H1 (cell line): ENCODE measurements at regions of chr19 and their contacts with region 1.

Region 1: DNA sequence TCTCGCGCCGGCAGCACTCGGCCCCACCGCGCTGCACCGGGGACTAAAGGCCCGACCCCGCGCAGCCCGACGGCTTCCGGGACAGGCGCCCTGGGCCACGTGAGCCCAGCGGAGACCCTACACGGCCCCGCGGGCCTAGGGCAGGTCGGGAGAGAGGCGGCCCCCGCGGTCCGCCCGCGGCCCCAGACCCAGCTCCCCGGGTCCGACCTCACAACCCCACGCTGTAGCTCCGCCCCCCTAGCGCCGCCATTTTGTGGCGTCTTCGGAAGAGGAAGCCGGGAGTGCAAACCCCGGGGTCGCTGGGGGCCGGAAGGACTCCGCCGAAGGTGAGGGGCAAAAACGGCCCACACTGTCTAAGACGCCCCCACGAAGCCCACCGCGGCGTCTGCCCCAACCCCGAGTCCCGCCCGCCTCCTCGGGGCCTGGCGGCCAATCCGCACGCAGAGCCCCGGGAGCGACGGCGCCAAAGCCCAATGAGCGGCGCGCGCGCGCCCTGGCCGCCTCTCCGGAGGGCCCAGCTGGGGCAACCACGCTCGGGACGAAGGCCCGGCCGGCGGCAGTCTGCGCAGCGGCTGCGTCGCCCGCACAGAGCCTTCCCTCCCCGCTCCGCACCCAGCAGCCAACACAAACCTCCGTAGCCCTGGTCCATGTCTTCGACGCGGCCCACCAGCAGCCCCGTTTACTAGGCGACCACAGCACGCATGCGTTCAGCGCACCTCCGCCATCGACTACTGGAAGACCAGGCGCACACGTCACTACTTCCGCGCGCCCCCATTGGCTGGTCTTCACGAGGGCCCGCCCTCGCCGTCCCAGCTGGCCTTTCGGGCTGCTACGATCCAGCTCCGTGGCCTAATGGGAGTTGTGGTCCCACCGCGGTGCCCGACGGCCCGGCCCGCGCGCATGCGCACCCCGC is at the start of gene AKAP8:
- DNase-seq: peak; percentile 95 to 97
- H3K4me3 ChIP-seq: peak within 1 kb of the TSS; percentile 84 to 99 (median 94)
- H3K27ac ChIP-seq: peak within 1 kb of the TSS; percentile 97
- H3K4me1 ChIP-seq: peaks cover 0 to 9% (median 6%) of the 10 kb centered on the region in 4 experiments; a peak in 6 of 7 replicates
- H3K27me3 ChIP-seq: no peaks in the 10 kb centered on the region
- CTCF ChIP-seq: no peak
- EP300 ChIP-seq: no peak
- POLR2A ChIP-seq: peak; percentile 91 to 96
- RAD21 ChIP-seq: no peak
- total RNA-seq, gene AKAP8: 41.0 and 41.3 TPM in 2 replicates

Region 2: DNA sequence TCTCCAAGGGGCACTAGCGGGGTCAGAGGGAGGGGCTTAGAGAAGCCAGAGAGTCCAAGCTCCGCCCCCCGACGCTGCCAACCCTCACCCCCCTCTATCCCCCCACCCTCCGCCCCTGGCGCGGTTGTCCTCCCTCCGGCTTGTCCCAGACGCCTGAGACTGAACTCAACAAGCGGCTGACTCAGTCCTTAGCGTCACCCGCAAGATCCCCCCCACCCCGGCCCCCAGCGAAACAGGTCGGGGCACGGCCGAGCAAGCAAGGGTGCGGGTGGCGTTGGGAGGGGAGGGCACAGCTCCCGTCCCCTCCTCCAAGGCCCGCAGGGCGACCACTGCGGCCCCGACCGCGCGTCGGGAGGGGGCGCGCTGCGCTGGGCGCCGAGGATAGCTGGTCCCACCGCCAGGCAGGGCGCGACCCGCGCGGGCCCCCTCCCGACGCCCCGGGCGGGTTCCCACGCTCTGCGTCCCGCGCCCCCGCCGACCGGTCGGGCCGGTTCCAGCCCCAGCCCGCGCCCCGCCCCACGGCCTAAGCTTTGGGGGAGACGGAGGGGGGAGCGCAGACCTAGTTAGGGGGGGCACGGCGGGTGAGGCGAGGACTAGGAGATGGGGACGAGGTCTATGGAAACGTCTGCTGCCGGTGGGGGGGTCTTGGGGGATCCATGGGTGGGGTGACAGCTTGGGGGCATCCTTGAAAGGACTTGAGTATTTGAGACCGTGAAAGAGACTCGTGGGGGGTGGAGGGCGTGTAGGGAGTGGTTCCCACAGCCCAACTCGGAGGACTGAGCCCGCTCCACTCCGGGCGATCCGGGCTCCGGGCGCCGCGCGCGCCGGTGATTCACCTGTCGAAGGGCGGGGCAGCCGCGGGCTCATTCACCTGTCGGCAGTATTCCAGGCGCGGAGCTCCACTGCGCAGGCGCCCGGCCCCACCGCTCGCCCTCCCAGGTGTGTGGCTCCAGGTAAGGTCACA is 183.7 kb before region 1 on chr19:
- CTCF ChIA-PET with region 1: interaction called, 3 read pairs
- POLR2A ChIA-PET with region 1: interaction called, 13 read pairs
- DNase-seq: peak in 1 of 2 experiments; percentile 98
- H3K4me3 ChIP-seq: peak overlapping the region; percentile 49 to 80 (median 56)
- H3K27ac ChIP-seq: peak overlapping the region; percentile 73
- H3K4me1 ChIP-seq: peaks cover 4 to 15% (median 9%) of the 10 kb centered on the region in 4 experiments
- H3K27me3 ChIP-seq: no peaks in the 10 kb centered on the region; a peak in 1 of 7 replicates
- CTCF ChIP-seq: peak; percentile 33 to 45 (median 35)
- EP300 ChIP-seq: peak in 1 of 2 experiments; percentile 60; a peak in 1 of 3 replicates
- POLR2A ChIP-seq: no peak
- RAD21 ChIP-seq: peak in 1 of 2 experiments; percentile 35; a peak in 2 of 4 replicates

Region 3: DNA sequence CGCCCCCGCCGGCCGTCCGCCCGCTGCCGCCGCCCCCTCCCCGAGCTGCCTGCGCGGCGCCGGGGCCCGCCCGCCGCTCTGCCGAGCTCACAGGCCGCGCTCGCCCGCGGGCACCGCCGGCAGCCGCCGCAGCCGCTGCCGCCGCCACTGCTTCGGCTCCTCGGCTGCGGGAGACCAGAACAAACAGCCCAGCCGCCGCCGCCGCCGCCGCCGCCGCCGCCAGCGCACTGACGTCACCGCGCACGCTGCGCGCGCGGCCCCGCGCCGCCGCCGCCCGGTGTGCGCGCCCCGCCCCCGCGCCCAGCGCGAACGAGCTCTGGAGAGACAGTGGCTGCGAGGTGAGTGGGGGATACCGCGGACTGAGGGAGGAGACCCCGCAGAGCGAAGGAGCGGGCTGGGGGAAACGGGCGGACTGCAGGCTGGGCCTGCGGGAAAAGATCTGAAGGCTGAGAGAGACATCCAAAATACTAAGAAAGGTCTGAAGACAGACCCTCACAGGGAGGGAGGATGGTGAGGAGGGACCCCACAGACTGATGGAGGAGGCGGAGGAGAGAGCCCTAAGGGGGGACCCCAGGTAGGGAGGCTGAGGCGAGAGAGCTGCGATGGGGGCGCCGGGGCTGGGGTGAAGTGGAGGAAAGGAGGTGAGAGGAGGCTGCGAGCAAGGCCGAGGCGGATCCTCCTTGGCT is 46.9 kb before region 1 on chr19 and contains the start of gene BRD4:
- CTCF ChIA-PET with region 1: no interaction called
- POLR2A ChIA-PET with region 1: interaction called, 12 read pairs
- DNase-seq: peak in 1 of 2 experiments; percentile 86
- H3K4me3 ChIP-seq: peak within 1 kb of the TSS; percentile 53 to 100 (median 90)
- H3K27ac ChIP-seq: peak within 1 kb of the TSS; percentile 94
- H3K4me1 ChIP-seq: peaks cover 0 to 2% (median 0%) of the 10 kb centered on the region in 4 experiments; a peak in 2 of 7 replicates
- H3K27me3 ChIP-seq: no peaks in the 10 kb centered on the region
- CTCF ChIP-seq: no peak
- EP300 ChIP-seq: no peak
- POLR2A ChIP-seq: no peak; a peak in 1 of 3 replicates
- RAD21 ChIP-seq: no peak
- total RNA-seq, gene BRD4: 144 and 146 TPM in 2 replicates

Region 4: GRCh38 chr19:15367439-15367838 is 11.9 kb before region 1 on chr19:
- CTCF ChIA-PET with region 1: interaction called, 3 read pairs
- POLR2A ChIA-PET with region 1: interaction called, 37 read pairs
- DNase-seq: no peak
- H3K4me3 ChIP-seq: no peak overlapping the region
- H3K27ac ChIP-seq: no peak overlapping the region
- H3K4me1 ChIP-seq: no peaks in the 10 kb centered on the region
- H3K27me3 ChIP-seq: no peaks in the 10 kb centered on the region
- CTCF ChIP-seq: no peak
- EP300 ChIP-seq: no peak
- POLR2A ChIP-seq: no peak
- RAD21 ChIP-seq: no peak

Region 5: GRCh38 chr19:15418588-15419412 is 39.5 kb after region 1 on chr19 and contains the start of gene AKAP8L:
- CTCF ChIA-PET with region 1: interaction called, 3 read pairs
- POLR2A ChIA-PET with region 1: interaction called, 60 read pairs
- DNase-seq: peak; percentile 96 to 99
- H3K4me3 ChIP-seq: peak within 1 kb of the TSS; percentile 85 to 98 (median 96)
- H3K27ac ChIP-seq: peak within 1 kb of the TSS; percentile 97
- H3K4me1 ChIP-seq: peaks cover 0 to 4% (median 3%) of the 10 kb centered on the region in 4 experiments; a peak in 5 of 7 replicates
- H3K27me3 ChIP-seq: no peaks in the 10 kb centered on the region
- CTCF ChIP-seq: peak; percentile 82 to 90 (median 89)
- EP300 ChIP-seq: peak in 1 of 2 experiments; percentile 11; a peak in 1 of 3 replicates
- POLR2A ChIP-seq: peak; percentile 93 to 98
- RAD21 ChIP-seq: peak; percentile 78 to 81
- total RNA-seq, gene AKAP8L: 127 and 138 TPM in 2 replicates

Region 6: GRCh38 chr19:15441317-15441716 is 62.0 kb after region 1 on chr19:
- CTCF ChIA-PET with region 1: no interaction called
- POLR2A ChIA-PET with region 1: no interaction called
- DNase-seq: no peak
- H3K4me3 ChIP-seq: no peak overlapping the region
- H3K27ac ChIP-seq: no peak overlapping the region
- H3K4me1 ChIP-seq: no peaks in the 10 kb centered on the region; a peak in 1 of 7 replicates
- H3K27me3 ChIP-seq: no peaks in the 10 kb centered on the region
- CTCF ChIP-seq: no peak
- EP300 ChIP-seq: no peak
- POLR2A ChIP-seq: no peak
- RAD21 ChIP-seq: no peak